ENCODE measurements at regions of chr2 and their contacts with region 1.

Region 1: GRCh38 chr2:618422-618990 is 58.7 kb downstream of the TMEM18 start:
- DNase-seq: no peak
- ATAC-seq: no peak
- H3K4me3 ChIP-seq: no peak overlapping the region
- H3K27ac ChIP-seq: no peak overlapping the region
- H3K4me1 ChIP-seq: no peaks in the 10 kb centered on the region
- H3K27me3 ChIP-seq: no peaks in the 10 kb centered on the region
- CTCF ChIP-seq: no peak
- POLR2A ChIP-seq: no peak
- RAD21 ChIP-seq: no peak

Region 2: GRCh38 chr2:535222-535621 is 83.3 kb before region 1 on chr2:
- CTCF ChIA-PET with region 1: no interaction called
- POLR2A ChIA-PET with region 1: no interaction called
- dilution Hi-C with region 1: no loop called
- in situ Hi-C with region 1: no loop called
- intact Hi-C with region 1: no loop called
- DNase-seq: no peak
- ATAC-seq: no peak
- H3K4me3 ChIP-seq: no peak overlapping the region
- H3K27ac ChIP-seq: no peak overlapping the region
- H3K4me1 ChIP-seq: no peaks in the 10 kb centered on the region
- H3K27me3 ChIP-seq: no peaks in the 10 kb centered on the region
- CTCF ChIP-seq: no peak
- POLR2A ChIP-seq: no peak
- RAD21 ChIP-seq: no peak

Region 3: GRCh38 chr2:691821-692761 is 73.6 kb after region 1 on chr2:
- CTCF ChIA-PET with region 1: no interaction called
- POLR2A ChIA-PET with region 1: no interaction called
- dilution Hi-C with region 1: no loop called
- in situ Hi-C with region 1: no loop called
- intact Hi-C with region 1: no loop called
- DNase-seq: no peak
- ATAC-seq: no peak
- H3K4me3 ChIP-seq: no peak overlapping the region
- H3K27ac ChIP-seq: no peak overlapping the region
- H3K4me1 ChIP-seq: peaks cover 5% of the 10 kb centered on the region
- H3K27me3 ChIP-seq: no peaks in the 10 kb centered on the region
- CTCF ChIP-seq: no peak
- POLR2A ChIP-seq: no peak
- RAD21 ChIP-seq: no peak

Region 4: DNA sequence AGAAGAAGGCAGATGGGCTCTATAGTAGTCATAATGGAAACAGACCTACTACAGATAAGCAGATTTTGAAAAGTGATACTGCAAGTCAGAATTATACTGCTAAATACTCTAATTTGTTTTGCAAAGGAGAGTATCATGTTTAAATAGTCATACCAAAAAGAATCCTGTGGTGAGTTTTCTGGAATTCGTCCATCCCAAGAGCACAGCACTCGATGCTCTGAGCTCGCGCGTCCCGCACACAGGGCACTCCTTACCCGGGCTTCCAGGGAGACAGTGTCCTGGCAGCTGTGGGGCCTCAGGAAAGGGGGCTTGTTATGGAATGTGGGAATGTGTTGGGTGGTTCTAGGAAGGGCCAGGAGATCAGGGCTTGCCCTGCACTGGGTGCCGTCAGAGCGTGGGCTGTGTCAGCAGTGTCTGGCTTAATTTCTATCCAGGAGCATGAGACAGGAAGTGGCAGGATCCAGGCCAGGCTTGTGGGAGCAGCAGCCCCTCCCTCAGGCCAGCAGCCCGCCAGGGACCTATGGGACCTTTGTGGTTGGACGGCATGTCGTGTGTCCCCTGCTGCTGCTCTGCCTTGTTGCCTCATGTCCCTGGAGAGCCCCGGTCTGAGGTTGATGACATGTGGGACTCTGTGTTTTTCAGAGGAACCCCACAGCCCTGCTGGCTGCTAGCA is 601.5 kb after region 1 on chr2:
- CTCF ChIA-PET with region 1: no interaction called
- POLR2A ChIA-PET with region 1: no interaction called
- dilution Hi-C with region 1: no loop called
- in situ Hi-C with region 1: no loop called
- intact Hi-C with region 1: loop called (anchors 5 kb)
- DNase-seq: no peak
- ATAC-seq: no peak
- H3K4me3 ChIP-seq: no peak overlapping the region
- H3K27ac ChIP-seq: no peak overlapping the region
- H3K4me1 ChIP-seq: no peaks in the 10 kb centered on the region
- H3K27me3 ChIP-seq: no peaks in the 10 kb centered on the region
- CTCF ChIP-seq: no peak
- POLR2A ChIP-seq: no peak
- RAD21 ChIP-seq: no peak

Region 5: GRCh38 chr2:1233281-1233680 is 614.8 kb after region 1 on chr2:
- CTCF ChIA-PET with region 1: no interaction called
- POLR2A ChIA-PET with region 1: no interaction called
- dilution Hi-C with region 1: no loop called
- in situ Hi-C with region 1: no loop called
- intact Hi-C with region 1: no loop called
- DNase-seq: no peak
- ATAC-seq: no peak
- H3K4me3 ChIP-seq: no peak overlapping the region
- H3K27ac ChIP-seq: no peak overlapping the region
- H3K4me1 ChIP-seq: no peaks in the 10 kb centered on the region
- H3K27me3 ChIP-seq: no peaks in the 10 kb centered on the region
- CTCF ChIP-seq: no peak
- POLR2A ChIP-seq: no peak
- RAD21 ChIP-seq: no peak

Measured in IMR-90 (cell line).